ENCODE measurements at regions of chr15 and their contacts with region 1.

Region 1: DNA sequence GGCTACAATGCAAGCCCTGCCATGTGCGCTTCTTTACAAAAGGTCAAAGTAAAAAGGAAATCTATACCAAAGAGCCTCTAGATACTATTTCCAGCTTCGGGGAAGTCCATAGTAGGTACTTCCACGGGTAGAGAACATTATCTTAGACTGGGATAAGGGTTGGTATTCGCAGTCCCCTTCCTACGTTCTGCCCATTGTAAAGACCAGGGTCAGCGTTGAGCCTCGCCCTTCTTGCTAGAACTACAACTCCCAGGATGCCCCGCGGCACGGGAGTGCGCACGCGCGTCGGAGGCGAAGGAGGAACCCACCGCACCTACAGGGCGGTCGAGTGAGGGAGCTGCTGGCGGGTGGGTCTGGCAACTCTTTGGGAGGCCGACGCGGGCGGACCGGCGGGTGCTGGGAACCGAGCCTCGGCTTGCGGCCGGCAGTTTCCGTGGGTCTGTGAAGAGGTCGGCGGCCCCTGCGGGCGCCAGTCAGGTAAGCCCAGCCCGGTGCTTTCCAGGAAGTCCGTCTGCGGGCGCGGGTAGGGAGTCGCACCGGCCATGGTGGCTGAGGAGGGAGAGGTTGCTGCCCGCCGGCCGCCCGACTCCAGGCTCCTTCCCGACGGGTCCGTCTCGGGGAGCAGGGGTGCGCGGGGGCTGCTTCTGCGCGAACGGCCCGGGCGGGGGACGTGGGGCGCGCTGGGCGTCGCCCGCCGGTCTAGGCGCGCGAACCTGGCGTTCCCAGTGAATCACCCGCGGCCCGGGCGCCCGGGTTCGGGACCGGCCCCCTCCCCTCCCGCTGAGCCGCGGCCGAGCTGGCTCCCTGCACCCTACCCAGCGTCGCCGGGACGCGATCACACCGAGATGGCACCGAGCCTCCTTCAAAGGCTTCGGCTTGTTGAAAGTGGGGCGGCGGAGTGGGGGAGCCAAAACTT is at the start of gene TMOD3:
- DNase-seq: peak; percentile 88
- ATAC-seq: peak; percentile 75
- H3K4me3 ChIP-seq: peak within 1 kb of the TSS; percentile 98
- H3K27ac ChIP-seq: peak within 1 kb of the TSS; percentile 91
- H3K4me1 ChIP-seq: peaks cover 56% of the 10 kb centered on the region
- H3K27me3 ChIP-seq: no peaks in the 10 kb centered on the region
- CTCF ChIP-seq: no peak
- total RNA-seq, gene TMOD3: 35.5 and 43.9 TPM in 2 replicates

Region 2: DNA sequence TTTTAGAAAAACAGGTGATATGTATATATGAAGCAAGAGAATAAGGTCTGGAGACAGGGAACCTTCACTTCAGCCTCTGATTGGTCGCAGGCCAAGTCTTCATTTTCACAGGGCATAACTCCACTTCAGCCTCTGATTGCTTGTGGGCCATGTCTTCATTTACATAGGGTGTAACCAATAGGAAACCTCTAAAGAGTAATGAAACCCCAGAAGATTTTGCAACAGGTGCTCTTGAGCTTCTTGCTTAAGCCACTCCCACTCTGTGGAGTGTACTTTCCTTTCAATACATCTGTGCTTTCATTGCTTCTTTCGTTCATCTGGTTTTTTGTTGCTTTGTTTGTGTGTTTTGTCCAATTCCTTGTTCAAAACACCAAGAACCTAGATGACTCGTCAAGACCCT is 170.9 kb before region 1 on chr15:
- CTCF ChIA-PET with region 1: no interaction called
- POLR2A ChIA-PET with region 1: no interaction called
- intact Hi-C with region 1: no loop called
- DNase-seq: no peak
- ATAC-seq: no peak
- H3K4me3 ChIP-seq: no peak overlapping the region
- H3K27ac ChIP-seq: no peak overlapping the region
- H3K4me1 ChIP-seq: no peaks in the 10 kb centered on the region
- H3K27me3 ChIP-seq: peaks cover 9% of the 10 kb centered on the region; the same call in 1 of the 2 replicates
- CTCF ChIP-seq: no peak

Region 3: GRCh38 chr15:51796845-51797401 is 32.7 kb before region 1 on chr15:
- CTCF ChIA-PET with region 1: no interaction called
- POLR2A ChIA-PET with region 1: no interaction called
- intact Hi-C with region 1: loop called (anchors 5 kb)
- DNase-seq: peak; percentile 57
- ATAC-seq: peak; percentile 72
- H3K4me3 ChIP-seq: no peak overlapping the region
- H3K27ac ChIP-seq: 0 out of 2 replicates have a peak overlapping the region, but pooled peaks have one; percentile 5
- H3K4me1 ChIP-seq: peaks cover 18% of the 10 kb centered on the region
- H3K27me3 ChIP-seq: no peaks in the 10 kb centered on the region
- CTCF ChIP-seq: no peak

Region 4: GRCh38 chr15:51874751-51875528 is 45.3 kb after region 1 on chr15:
- CTCF ChIA-PET with region 1: no interaction called
- POLR2A ChIA-PET with region 1: interaction called, 4 read pairs
- intact Hi-C with region 1: loop called (anchors 2 kb)
- DNase-seq: peak; percentile 95
- ATAC-seq: peak; percentile 95
- H3K4me3 ChIP-seq: peak overlapping the region; percentile 63
- H3K27ac ChIP-seq: peak overlapping the region; percentile 100
- H3K4me1 ChIP-seq: peaks cover 47% of the 10 kb centered on the region
- H3K27me3 ChIP-seq: no peaks in the 10 kb centered on the region
- CTCF ChIP-seq: no peak

Region 5: GRCh38 chr15:52082197-52083036 is 252.8 kb after region 1 on chr15:
- CTCF ChIA-PET with region 1: no interaction called
- POLR2A ChIA-PET with region 1: no interaction called
- intact Hi-C with region 1: no loop called
- DNase-seq: no peak
- ATAC-seq: no peak
- H3K4me3 ChIP-seq: no peak overlapping the region
- H3K27ac ChIP-seq: no peak overlapping the region
- H3K4me1 ChIP-seq: peaks cover 10% of the 10 kb centered on the region
- H3K27me3 ChIP-seq: no peaks in the 10 kb centered on the region
- CTCF ChIP-seq: no peak